K562 (cell line): ENCODE measurements at regions of chr15 and their contacts with region 1.

Region 1: DNA sequence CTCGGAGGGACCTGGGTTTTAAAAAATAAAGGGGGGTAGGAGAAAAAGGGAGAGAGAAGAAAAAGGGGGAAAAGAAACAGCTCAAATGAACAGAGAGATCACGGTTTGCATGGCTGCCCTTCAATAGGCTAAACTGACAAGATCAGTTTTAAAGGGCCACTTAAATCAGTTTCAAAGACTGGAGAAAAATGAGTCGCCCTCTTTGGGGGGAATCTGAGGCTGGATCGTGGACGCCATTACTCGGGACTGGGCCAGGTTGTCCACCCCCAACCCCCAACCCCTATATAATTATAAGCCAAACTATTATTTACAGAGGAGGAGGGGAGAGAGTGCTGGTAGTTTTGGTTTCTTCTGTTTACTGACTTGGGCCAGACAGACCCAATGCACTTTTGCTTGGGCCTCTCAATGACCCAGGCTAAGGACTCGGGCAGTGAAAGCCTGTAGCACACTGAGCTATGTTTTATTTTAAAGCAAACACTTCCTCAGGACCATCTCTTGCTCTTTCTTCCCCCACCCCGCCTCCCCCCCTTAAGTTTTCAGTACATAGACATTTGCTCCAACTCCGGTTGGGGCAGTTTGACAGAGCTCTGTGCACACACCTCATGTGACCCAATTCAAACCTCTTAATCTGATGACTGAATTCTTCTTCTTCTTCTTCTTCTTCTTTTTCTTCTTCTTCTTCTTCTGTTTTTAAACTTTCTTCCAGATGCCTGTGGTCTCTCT is 6.3 kb downstream of the NR2F2 start:
- DNase-seq: peak in 1 of 4 experiments; percentile 48
- ATAC-seq: peak; percentile 27
- H3K4me3 ChIP-seq: peak overlapping the region; percentile 71
- H3K27ac ChIP-seq: peak overlapping the region; percentile 58
- H3K4me1 ChIP-seq: peaks cover 26 to 36% of the 10 kb centered on the region in 2 experiments
- H3K27me3 ChIP-seq: no peaks in the 10 kb centered on the region
- CTCF ChIP-seq: no peak
- EP300 ChIP-seq: no peak
- POLR2A ChIP-seq: no peak
- RAD21 ChIP-seq: no peak

Region 2: DNA sequence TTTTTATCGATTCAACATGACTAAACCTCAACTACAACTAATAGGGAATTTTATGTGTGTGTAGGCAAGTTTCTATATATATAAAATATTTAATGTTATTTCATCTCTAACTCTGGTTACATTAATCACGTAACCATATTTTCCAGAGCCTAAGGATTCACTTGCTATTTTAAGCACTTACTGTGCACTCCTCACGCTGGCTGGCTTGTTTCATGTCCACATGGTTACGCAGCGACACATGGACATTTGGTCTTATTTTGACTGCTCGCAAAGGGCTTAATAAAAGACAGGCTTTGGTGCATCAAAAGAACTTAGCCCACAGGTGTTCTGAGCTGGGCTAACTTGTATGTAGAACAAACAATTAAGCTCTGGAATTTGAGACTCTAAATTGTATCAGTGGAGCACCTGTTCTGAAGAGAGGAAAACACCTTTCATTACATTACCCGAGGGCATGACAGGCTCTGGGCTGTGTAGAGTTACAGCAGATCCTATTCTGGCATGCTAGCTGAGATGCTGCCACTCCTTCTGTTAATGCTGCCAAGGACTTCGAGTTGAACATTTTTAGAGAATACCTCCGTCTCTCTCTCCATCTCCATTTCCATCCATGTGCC is 136.3 kb before region 1 on chr15:
- CTCF ChIA-PET with region 1: no interaction called
- POLR2A ChIA-PET with region 1: no interaction called
- in situ Hi-C with region 1: no loop called
- intact Hi-C with region 1: no loop called
- DNase-seq: no peak
- ATAC-seq: no peak
- H3K4me3 ChIP-seq: no peak overlapping the region
- H3K27ac ChIP-seq: no peak overlapping the region
- H3K4me1 ChIP-seq: no peaks in the 10 kb centered on the region; a peak in 2 of 5 replicates
- H3K27me3 ChIP-seq: no peaks in the 10 kb centered on the region
- CTCF ChIP-seq: no peak
- EP300 ChIP-seq: no peak
- POLR2A ChIP-seq: no peak
- RAD21 ChIP-seq: no peak

Region 3: DNA sequence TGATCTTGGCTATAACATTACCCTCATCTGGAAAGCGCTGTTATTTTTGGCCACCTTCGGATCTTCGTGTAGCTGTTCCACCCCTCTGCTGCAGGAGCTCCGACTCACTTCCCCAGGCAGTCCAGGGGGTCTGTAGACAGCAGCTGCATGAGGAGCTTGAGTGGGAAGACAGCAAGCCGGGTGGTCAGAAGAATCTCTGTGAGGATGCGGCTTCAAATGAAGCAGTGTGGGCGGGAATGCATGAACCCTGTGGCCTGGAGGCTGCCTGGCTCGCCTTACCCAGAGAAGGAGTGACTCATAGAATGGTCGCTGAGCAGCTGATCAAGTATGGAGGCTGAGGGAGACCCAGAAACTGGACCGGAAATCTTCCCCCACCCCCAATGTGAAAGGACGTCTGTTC is 51.5 kb before region 1 on chr15:
- CTCF ChIA-PET with region 1: no interaction called
- POLR2A ChIA-PET with region 1: no interaction called
- in situ Hi-C with region 1: no loop called
- intact Hi-C with region 1: no loop called
- DNase-seq: peak in 3 of 4 experiments; percentile 21 to 59 (median 28)
- ATAC-seq: peak; percentile 60
- H3K4me3 ChIP-seq: no peak overlapping the region
- H3K27ac ChIP-seq: no peak overlapping the region; the same call in 2 of the 3 replicates
- H3K4me1 ChIP-seq: peaks cover 8 to 13% of the 10 kb centered on the region in 2 experiments; a peak in 4 of 5 replicates
- H3K27me3 ChIP-seq: no peaks in the 10 kb centered on the region
- CTCF ChIP-seq: no peak
- EP300 ChIP-seq: no peak
- POLR2A ChIP-seq: no peak
- RAD21 ChIP-seq: no peak

Region 4: GRCh38 chr15:96348112-96349027 is 11.6 kb after region 1 on chr15:
- CTCF ChIA-PET with region 1: no interaction called
- POLR2A ChIA-PET with region 1: interaction called, 13 read pairs
- in situ Hi-C with region 1: no loop called
- intact Hi-C with region 1: no loop called
- DNase-seq: no peak
- ATAC-seq: no peak
- H3K4me3 ChIP-seq: no peak overlapping the region
- H3K27ac ChIP-seq: no peak overlapping the region
- H3K4me1 ChIP-seq: peaks cover 3 to 39% of the 10 kb centered on the region in 2 experiments; a peak in 3 of 5 replicates
- H3K27me3 ChIP-seq: no peaks in the 10 kb centered on the region
- CTCF ChIP-seq: no peak
- EP300 ChIP-seq: no peak
- POLR2A ChIP-seq: no peak
- RAD21 ChIP-seq: no peak